BJ (cell line): ENCODE measurements at regions of chr1 and their contacts with region 1.

Region 1: DNA sequence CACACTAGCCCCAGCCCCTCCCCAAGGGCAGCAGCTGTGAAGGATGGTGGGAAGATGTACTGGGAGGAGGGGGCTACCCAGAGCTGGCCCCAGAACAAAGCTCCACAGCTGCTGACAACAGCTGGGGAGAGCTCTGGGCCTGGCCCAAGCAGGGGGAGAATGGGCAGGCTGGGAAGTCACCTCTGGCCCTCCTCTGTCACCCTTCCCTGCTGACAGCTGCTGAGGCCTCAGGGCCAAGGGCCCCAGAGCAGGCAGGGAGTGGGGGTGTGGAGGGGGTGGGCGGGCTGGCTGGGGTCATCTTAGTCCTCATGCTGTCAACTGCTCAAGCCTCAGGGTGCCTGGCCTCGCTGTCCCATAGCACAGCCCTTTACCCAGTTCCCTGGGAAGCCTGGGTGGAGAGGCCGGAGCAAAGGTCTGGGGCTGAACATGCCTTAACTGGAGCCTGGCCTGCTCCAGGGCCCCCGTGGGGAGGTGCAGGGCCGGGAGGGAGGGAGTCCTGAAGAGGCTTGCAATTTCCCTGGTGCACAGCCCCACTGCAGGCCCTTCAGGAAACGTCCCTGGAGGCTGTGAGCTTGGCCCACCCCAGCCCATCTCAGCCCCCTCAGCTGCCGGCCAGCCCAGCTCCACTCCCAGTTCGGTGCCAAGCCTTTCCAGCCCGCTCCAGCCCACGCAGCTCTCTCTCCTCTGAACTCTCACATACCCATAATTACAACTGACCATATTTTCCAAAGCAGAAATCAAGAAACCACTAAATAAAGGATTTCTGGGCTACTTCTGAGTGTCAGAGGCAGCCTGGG is 25.7 kb downstream of the HSPG2 start:
- DNase-seq: no peak
- H3K4me3 ChIP-seq: no peak overlapping the region
- H3K27me3 ChIP-seq: no peaks in the 10 kb centered on the region
- CTCF ChIP-seq: no peak

Region 2: GRCh38 chr1:21669258-21670058 is 241.9 kb before region 1 on chr1 and contains the start of gene RAP1GAP:
- CTCF ChIA-PET with region 1: no interaction called
- POLR2A ChIA-PET with region 1: no interaction called
- DNase-seq: no peak
- H3K4me3 ChIP-seq: 0 out of 2 replicates have a peak within 1 kb of the TSS, but pooled peaks have one; percentile 10
- H3K27me3 ChIP-seq: peaks cover 40% of the 10 kb centered on the region
- CTCF ChIP-seq: peak; percentile 11; the same call in 1 of the 2 replicates
- polyA plus RNA-seq, gene RAP1GAP: 0.16 and 0.31 TPM in 2 replicates

Region 3: DNA sequence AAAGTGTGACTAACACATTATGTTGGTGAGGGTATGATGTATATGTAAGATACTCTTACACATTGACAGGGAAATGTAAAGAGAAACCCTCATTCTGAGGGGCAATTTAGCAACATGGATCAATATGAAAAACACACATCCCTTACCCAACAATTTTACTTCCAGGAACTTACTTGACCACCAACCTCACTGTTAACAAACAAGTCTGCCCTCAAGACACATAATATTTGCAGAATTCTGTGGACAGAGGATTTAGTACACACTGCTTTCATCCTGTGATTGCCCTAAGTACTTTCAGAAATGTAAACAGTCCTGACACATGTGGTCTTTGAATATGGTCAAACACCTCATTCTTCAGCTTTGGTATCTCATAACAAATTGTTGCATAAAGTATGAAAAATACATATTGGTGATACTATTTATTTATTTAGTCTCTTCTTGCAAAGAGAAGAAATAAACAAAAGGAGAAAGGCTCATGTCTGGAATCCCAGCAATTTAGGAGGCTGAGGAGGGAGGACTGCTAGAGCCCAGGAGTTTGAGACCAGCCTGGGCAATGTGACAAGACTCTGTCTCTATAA is 135.3 kb before region 1 on chr1:
- CTCF ChIA-PET with region 1: no interaction called
- POLR2A ChIA-PET with region 1: interaction called, 19 read pairs
- DNase-seq: peak; percentile 59
- H3K4me3 ChIP-seq: no peak overlapping the region
- H3K27me3 ChIP-seq: no peaks in the 10 kb centered on the region
- CTCF ChIP-seq: no peak

Region 4: DNA sequence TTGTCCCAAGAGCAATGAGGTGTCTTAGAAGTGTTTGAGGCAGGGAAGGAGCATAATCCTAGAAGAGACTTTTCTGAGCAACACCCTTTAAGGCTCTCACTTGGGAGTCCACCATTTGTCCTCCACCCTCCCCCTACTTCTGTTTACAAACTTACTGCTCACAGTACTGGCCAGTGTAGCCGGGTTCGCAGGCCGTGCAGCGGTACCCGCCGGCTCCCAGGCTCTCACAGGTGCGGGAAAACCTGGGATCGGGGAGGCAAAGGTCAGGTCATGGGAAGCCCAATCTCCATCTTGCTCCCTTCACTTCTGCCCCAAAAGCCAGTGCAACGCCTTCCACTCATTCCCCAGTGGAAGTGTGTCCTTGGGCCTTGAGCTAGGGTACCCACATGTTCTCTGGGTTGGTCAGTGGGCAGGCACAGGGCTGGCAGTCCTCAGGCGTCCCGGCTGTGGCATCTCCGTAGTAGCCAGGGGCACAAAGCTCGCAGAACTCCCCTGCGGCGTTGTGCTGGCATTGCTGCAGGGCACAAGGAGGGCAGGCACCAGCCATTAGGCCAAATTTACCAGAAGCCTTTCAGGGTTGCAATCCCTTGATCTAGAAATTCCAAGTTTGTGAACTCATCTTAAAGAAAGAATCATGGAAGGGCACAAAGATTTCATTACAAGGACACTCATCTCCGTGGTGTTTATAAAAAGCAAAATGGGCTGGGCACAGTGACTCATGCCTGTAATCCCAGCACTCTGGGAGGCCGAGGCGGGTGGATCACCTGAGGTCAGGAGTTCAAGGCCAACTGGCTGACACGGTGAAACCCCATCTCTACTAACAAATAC is 49.6 kb before region 1 on chr1:
- CTCF ChIA-PET with region 1: no interaction called
- POLR2A ChIA-PET with region 1: no interaction called
- DNase-seq: no peak
- H3K4me3 ChIP-seq: no peak overlapping the region
- H3K27me3 ChIP-seq: no peaks in the 10 kb centered on the region
- CTCF ChIP-seq: no peak

Region 5: GRCh38 chr1:21894018-21894881 is 17.2 kb before region 1 on chr1:
- CTCF ChIA-PET with region 1: no interaction called
- POLR2A ChIA-PET with region 1: no interaction called
- DNase-seq: no peak
- H3K4me3 ChIP-seq: no peak overlapping the region
- H3K27me3 ChIP-seq: no peaks in the 10 kb centered on the region
- CTCF ChIP-seq: no peak